ENCODE measurements at regions of chr4 and their contacts with region 1.

Region 1: GRCh38 chr4:183987987-183988392 is 82.9 kb downstream of the STOX2 start:
- DNase-seq: peak; percentile 90
- H3K4me3 ChIP-seq: peak overlapping the region in 3 of 4 donors; percentile 25 to 40 (median 39)
- H3K27ac ChIP-seq: peak overlapping the region; percentile 75 to 83 (median 82)
- H3K4me1 ChIP-seq: peaks cover 0 to 29% (median 19%) of the 10 kb centered on the region in 4 donors
- H3K27me3 ChIP-seq: no peaks in the 10 kb centered on the region
- CTCF ChIP-seq: no peak
- EP300 ChIP-seq: peak in 2 of 4 donors; percentile 50 to 87
- POLR2A ChIP-seq: no peak

Region 2: GRCh38 chr4:183905081-183905592 is 82.9 kb before region 1 on chr4 and contains the start of gene STOX2:
- intact Hi-C with region 1: loop called (anchors 5 kb)
- DNase-seq: peak; percentile 80
- H3K4me3 ChIP-seq: peak within 1 kb of the TSS; percentile 48 to 75 (median 64)
- H3K27ac ChIP-seq: peak within 1 kb of the TSS; percentile 35 to 78 (median 69)
- H3K4me1 ChIP-seq: peaks cover 0 to 28% (median 20%) of the 10 kb centered on the region in 4 donors
- H3K27me3 ChIP-seq: no peaks in the 10 kb centered on the region
- CTCF ChIP-seq: no peak
- EP300 ChIP-seq: no peak
- POLR2A ChIP-seq: no peak
- total RNA-seq, gene STOX2: 2.2 to 9.6 (median 5.7) TPM

Region 3: DNA sequence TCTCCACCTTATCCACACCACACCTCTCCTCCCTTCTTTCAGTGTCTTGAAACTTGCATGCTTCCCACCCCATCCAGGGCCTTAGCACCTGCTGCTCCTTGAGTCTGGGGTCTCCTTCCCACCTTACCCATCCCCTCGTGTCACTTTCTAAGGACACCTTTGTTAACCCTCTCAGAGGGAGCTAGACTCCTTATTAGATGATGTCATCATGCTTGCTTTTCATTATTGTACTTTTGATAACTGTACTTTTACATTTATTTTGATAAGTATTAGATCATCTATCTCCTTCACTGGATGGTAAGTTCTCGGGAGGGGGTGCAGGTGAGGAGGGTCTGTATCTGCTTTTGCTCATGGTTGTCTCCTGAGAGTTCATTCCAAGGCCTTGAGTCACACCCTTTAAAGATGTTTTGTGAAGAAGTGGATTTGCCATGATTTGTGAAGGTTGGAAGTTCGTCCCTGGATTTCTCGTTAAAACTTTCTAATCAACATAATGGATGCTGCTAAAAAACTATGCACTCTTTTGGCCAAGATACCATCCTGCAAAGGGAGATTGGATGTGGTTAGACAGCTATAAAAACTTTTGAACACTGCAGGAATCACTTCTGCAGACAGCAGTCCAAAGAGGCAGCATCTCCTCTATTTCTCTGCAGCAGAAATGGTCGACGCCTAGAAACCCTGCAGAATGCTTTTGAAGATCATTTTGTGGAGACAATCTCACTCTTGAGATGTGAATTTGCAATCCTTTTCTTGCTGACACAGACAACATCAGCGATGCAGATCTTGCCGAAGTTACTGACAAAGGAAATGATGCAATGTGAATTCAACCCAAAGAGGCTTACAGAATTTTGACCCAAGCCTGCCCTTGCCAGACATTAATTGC is 160.1 kb after region 1 on chr4:
- intact Hi-C with region 1: loop called (anchors 5 kb)
- DNase-seq: no peak
- H3K4me3 ChIP-seq: no peak overlapping the region
- H3K27ac ChIP-seq: no peak overlapping the region
- H3K4me1 ChIP-seq: peaks cover 0 to 44% (median 35%) of the 10 kb centered on the region in 4 donors
- H3K27me3 ChIP-seq: no peaks in the 10 kb centered on the region
- CTCF ChIP-seq: no peak
- EP300 ChIP-seq: no peak
- POLR2A ChIP-seq: no peak

Region 4: DNA sequence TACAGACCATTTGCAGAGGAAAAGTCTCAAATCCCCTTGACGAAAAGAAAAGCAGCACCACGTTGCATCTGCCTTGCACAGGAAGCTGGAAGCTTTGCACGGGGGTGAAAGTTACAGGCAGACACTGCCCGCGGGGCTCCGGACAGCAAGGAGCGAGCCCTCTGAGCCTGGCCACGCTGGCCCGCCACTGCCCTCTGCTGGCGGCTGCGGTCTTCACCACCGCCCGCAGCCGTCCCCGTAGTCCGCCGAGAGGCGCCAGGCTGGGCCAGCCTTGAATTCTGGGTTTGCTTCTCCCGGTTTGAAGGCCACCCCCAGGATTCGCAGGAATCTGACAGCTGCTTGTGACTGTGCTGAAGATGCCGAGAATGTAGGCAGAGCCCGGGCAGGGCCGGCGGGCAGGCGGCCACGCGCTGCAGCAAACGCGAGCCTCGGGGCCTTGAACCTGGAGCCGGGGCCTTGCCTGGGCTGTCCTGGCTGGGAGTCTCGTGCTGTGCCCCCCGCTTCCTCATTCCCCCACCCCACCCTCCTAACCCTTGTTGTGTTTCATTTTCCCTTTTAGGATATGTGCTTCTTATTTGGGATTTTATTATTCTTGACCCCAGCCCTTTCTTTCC is 180.5 kb after region 1 on chr4:
- intact Hi-C with region 1: loop called (anchors 5 kb)
- DNase-seq: peak; percentile 83
- H3K4me3 ChIP-seq: no peak overlapping the region
- H3K27ac ChIP-seq: no peak overlapping the region
- H3K4me1 ChIP-seq: peaks cover 0 to 8% (median 7%) of the 10 kb centered on the region in 4 donors
- H3K27me3 ChIP-seq: peaks cover 0 to 13% (median 6%) of the 10 kb centered on the region in 3 donors
- CTCF ChIP-seq: peak; percentile 60 to 96 (median 79)
- EP300 ChIP-seq: no peak
- POLR2A ChIP-seq: no peak

Region 5: GRCh38 chr4:184805462-184806228 is 817.7 kb after region 1 on chr4:
- intact Hi-C with region 1: no loop called
- DNase-seq: no peak
- H3K4me3 ChIP-seq: no peak overlapping the region
- H3K27ac ChIP-seq: peak overlapping the region in 1 of 4 donors; percentile 5
- H3K4me1 ChIP-seq: peaks cover 0 to 53% (median 48%) of the 10 kb centered on the region in 4 donors
- H3K27me3 ChIP-seq: no peaks in the 10 kb centered on the region
- CTCF ChIP-seq: no peak
- EP300 ChIP-seq: no peak
- POLR2A ChIP-seq: no peak